ENCODE measurements at regions of chr5 and their contacts with region 1.

Region 1: GRCh38 chr5:176959051-176959450 is 47.5 kb downstream of the UIMC1 start:
- DNase-seq: peak; percentile 46
- ATAC-seq: peak; percentile 70
- H3K4me3 ChIP-seq: no peak overlapping the region
- H3K27ac ChIP-seq: no peak overlapping the region
- H3K4me1 ChIP-seq: no peaks in the 10 kb centered on the region
- H3K27me3 ChIP-seq: no peaks in the 10 kb centered on the region
- CTCF ChIP-seq: peak; percentile 62
- EP300 ChIP-seq: no peak
- POLR2A ChIP-seq: no peak
- RAD21 ChIP-seq: peak; percentile 10; the same call in 1 of the 2 replicates

Region 2: GRCh38 chr5:175895215-175896102 is 1063.6 kb before region 1 on chr5:
- CTCF ChIA-PET with region 1: no interaction called
- POLR2A ChIA-PET with region 1: no interaction called
- in situ Hi-C with region 1: no loop called
- intact Hi-C with region 1: loop called (anchors 5 kb)
- DNase-seq: no peak
- ATAC-seq: no peak
- H3K4me3 ChIP-seq: no peak overlapping the region
- H3K27ac ChIP-seq: no peak overlapping the region
- H3K4me1 ChIP-seq: peaks cover 2% of the 10 kb centered on the region
- H3K27me3 ChIP-seq: no peaks in the 10 kb centered on the region
- CTCF ChIP-seq: no peak
- EP300 ChIP-seq: no peak
- POLR2A ChIP-seq: no peak
- RAD21 ChIP-seq: no peak

Region 3: DNA sequence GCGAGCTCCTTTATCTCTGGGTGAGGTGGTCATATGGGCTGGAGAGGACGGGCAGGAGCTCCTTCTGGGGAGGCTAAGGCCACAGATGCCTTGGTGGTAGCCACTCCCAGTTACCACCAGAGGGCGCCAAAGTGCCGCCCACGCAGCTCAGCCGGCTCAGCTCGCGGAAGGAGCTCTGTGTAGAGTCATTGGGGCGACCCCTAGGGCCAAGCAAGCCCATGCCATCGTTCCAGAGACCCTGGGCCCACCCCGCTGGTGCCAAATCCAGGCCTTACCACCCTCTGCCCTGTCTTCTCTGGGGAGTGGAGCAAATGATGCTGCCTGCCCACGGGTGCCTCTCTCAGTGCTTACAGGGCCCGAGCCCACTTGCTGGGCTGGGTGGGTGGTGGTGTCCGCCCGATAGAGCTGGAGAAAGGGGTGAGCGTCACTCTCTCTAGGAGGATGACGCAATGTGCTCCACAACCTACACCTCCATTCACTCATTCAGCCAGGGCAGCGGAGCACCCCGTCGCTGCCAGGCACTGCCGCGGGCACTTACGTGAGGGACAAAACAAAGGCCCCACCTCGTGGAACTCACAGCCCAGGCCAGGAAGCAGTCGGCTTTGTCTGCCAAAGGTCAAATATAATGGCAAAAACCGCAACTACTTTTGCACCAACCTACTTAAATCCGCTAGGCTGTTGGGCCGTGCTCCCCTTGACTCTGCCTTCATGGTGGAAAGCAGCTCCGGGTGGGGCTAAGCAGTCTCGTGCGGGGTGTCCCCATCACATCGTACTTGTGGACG is 298.0 kb before region 1 on chr5:
- CTCF ChIA-PET with region 1: interaction called, 10 read pairs
- POLR2A ChIA-PET with region 1: no interaction called
- in situ Hi-C with region 1: loop called (anchors 10 kb)
- intact Hi-C with region 1: loop called (anchors 2 kb)
- DNase-seq: peak; percentile 65
- ATAC-seq: peak; percentile 84
- H3K4me3 ChIP-seq: no peak overlapping the region; a peak in 1 of 6 replicates
- H3K27ac ChIP-seq: no peak overlapping the region
- H3K4me1 ChIP-seq: peaks cover 14% of the 10 kb centered on the region
- H3K27me3 ChIP-seq: peaks cover 5 to 7% of the 10 kb centered on the region in 2 experiments; a peak in 4 of 5 replicates
- CTCF ChIP-seq: peak; percentile 97
- EP300 ChIP-seq: no peak
- POLR2A ChIP-seq: no peak
- RAD21 ChIP-seq: peak; percentile 93

Region 4: GRCh38 chr5:176810084-176810597 is 148.9 kb before region 1 on chr5 and contains the start of gene UNC5A:
- CTCF ChIA-PET with region 1: interaction called, 4 read pairs
- POLR2A ChIA-PET with region 1: no interaction called
- in situ Hi-C with region 1: no loop called
- intact Hi-C with region 1: loop called (anchors 2 kb)
- DNase-seq: no peak
- ATAC-seq: peak; percentile 52
- H3K4me3 ChIP-seq: peak within 1 kb of the TSS; percentile 40 to 71 (median 41); a peak in 5 of 6 replicates
- H3K27ac ChIP-seq: no peak within 1 kb of the TSS
- H3K4me1 ChIP-seq: peaks cover 11% of the 10 kb centered on the region
- H3K27me3 ChIP-seq: peaks cover 12 to 59% of the 10 kb centered on the region in 2 experiments
- CTCF ChIP-seq: no peak
- EP300 ChIP-seq: no peak
- POLR2A ChIP-seq: no peak
- RAD21 ChIP-seq: no peak
- total RNA-seq, gene UNC5A: not detected in 2 replicates